Heart left ventricle (tissue), 16 donors: ENCODE measurements at regions of chr10 and their contacts with region 1.

Region 1: DNA sequence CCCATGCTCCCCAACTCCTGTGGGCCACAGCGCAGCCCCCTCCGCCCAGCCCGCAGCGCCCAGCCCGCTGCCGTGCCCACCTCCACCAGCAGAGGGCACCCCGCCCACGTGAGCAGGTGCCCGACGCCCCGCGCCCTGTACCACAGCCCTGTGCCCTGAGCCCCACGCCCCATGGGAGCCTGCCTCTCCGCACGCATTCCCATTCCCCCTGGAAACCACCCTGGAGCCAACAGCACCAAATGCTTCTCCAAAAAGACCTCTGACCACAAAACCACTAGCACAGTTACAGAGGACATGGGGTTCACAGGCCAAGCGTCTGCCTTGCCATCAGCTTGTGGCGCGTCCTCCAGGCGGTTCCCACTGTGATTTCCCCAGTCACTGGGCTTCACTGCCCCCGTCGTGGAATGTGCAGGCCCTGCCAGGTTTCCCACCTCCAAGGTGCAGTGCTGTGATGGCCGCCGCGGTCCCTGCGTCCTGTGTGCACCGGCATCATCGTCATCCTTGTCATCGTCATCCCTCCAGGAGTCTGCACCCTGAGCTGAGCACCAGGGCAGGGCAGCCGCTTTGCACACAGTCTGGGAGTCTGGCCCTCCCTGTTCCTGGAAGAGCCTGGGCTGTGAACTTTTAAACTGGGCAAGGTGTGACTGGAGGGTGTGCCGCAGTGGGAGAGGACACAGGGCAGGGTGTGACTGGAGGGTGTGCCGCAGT is 61.7 kb downstream of the PWWP2B start:
- DNase-seq: peak; percentile 51 to 85 (median 61)
- ATAC-seq: peak; percentile 40 to 67 (median 58)
- H3K4me3 ChIP-seq: no peak overlapping the region
- H3K27ac ChIP-seq: no peak overlapping the region
- H3K4me1 ChIP-seq: peaks cover 0 to 32% (median 22%) of the 10 kb centered on the region in 12 donors
- H3K27me3 ChIP-seq: peaks cover 0 to 10% (median 0%) of the 10 kb centered on the region in 9 donors
- CTCF ChIP-seq: peak; percentile 88 to 99 (median 96)
- POLR2A ChIP-seq: no peak

Region 2: DNA sequence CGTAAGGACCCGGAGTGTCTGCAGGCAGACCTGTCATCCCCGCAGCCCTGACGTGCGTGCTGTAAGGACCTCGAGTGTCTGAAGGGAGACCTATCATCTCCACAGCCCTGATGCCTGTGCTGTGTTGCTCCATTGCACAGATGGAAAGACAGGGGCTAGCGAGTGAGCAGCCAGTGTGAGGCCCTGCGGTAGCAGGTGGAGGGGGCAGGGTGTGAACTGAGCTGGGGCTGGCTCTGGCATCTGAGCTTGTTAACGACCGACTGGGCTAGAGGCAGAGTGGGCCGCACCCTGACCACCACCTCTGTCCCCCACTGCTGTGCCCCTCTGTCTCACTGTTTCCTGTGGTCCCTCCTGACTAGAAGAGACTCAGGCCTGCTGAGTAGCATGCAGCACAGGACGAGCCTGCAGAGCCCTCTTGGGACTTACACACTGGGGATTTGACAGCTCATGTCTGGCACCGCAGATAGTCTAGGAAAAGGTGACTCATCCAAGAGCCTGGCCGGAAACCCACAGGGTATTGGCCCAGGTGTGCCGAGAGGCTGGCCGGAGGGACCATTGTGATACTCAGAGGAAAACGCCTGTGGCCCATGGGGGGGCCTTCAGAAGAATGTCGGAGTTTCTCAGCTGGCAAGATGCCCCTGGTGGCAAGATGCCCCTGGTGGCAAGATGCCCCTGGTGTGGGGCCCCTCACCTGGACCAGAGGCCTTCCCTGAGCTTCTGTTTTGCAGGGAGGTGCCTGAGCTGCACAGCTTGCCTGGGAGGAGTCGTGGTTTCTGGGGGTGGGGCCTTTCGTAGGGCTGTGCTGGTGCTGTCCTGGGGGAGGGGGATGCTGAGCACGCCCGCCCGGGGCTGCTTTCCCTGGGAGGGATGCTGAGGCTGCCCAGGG is 113.1 kb after region 1 on chr10:
- intact Hi-C with region 1: loop called in 9 of 10 experiments (anchors 2 to 5 kb)
- DNase-seq: peak in 4 of 5 donors; percentile 61 to 87 (median 70)
- ATAC-seq: peak; percentile 81 to 94 (median 88)
- H3K4me3 ChIP-seq: no peak overlapping the region
- H3K27ac ChIP-seq: peak overlapping the region in 7 of 12 donors; percentile 20 to 72 (median 55)
- H3K4me1 ChIP-seq: peaks cover 14 to 56% (median 44%) of the 10 kb centered on the region in 12 donors
- H3K27me3 ChIP-seq: no peaks in the 10 kb centered on the region
- CTCF ChIP-seq: no peak
- POLR2A ChIP-seq: no peak

Region 3: DNA sequence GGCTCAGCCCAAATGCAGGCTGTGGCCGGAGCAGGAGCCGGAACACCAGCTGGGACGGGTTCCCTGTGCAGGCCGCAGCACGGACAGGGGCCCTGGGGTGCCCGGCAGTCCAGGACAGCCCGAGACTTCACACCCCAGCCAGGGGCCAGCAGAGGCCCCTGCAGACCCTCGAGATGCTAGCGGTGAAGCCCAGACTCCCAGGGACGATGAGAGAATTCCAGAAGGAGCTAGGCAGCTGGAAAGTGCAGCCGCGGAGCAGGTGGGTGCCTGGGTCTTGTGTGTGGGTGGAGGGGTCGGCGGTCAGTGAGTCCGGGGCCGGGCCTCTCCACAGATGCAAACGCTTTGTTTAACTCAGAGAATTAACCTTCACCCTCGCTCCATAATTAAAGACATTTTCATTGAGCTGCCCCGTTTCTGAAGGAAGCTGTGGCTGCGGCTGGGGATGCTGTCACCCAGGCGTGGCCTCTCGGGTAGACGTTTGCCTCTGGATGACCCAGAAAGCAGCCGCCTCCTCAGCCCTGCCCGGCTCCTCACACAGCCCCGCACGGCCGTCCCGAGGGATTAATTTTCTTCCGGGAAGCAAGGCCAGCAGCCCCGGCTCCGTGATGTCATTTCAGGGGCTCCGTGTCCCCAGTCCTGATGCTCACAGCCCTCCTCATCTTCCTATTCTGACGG is 727.8 kb after region 1 on chr10:
- intact Hi-C with region 1: no loop called
- DNase-seq: peak in 2 of 5 donors; percentile 27 to 52
- ATAC-seq: no peak
- H3K4me3 ChIP-seq: no peak overlapping the region
- H3K27ac ChIP-seq: no peak overlapping the region
- H3K4me1 ChIP-seq: no peaks in the 10 kb centered on the region
- H3K27me3 ChIP-seq: peaks cover 0 to 34% (median 0%) of the 10 kb centered on the region in 9 donors
- CTCF ChIP-seq: no peak
- POLR2A ChIP-seq: no peak